Breast epithelium (tissue), 4 donors: ENCODE measurements at regions of chr11 and their contacts with region 1.

Region 1: GRCh38 chr11:5204787-5205186 is 4.3 kb upstream of the OR51V1 start:
- DNase-seq: no peak
- H3K4me3 ChIP-seq: no peak overlapping the region
- H3K27ac ChIP-seq: no peak overlapping the region
- H3K4me1 ChIP-seq: no peaks in the 10 kb centered on the region
- H3K27me3 ChIP-seq: no peaks in the 10 kb centered on the region
- CTCF ChIP-seq: peak in 1 of 3 donors; percentile 43
- POLR2A ChIP-seq: no peak

Region 2: DNA sequence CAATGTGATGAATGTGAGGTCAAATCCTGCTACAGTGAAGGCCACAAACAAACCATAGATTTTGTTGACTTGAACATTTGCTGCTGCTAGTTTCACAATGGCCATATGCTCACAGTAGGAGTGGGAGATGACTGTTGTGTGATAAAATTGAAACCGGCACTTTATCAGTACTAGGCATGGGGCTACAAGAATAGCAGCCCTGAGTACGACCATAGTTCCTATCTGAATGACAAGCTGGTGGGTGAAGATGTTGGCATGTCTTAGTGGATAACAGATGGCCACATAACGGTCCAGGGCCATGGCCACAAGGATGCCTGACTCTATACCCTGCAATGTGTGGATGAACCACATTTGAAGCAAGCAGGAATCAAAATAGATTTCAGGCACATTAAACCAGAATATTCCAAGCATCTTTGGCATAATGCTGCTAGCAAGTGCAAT is 53.1 kb before region 1 on chr11:
- intact Hi-C with region 1: loop called (anchors 2 kb)
- DNase-seq: no peak
- H3K4me3 ChIP-seq: no peak overlapping the region
- H3K27ac ChIP-seq: no peak overlapping the region
- H3K4me1 ChIP-seq: no peaks in the 10 kb centered on the region
- H3K27me3 ChIP-seq: no peaks in the 10 kb centered on the region
- CTCF ChIP-seq: no peak
- POLR2A ChIP-seq: no peak

Region 3: GRCh38 chr11:5267033-5267563 is 62.3 kb after region 1 on chr11:
- intact Hi-C with region 1: no loop called
- DNase-seq: no peak
- H3K4me3 ChIP-seq: no peak overlapping the region
- H3K27ac ChIP-seq: no peak overlapping the region
- H3K4me1 ChIP-seq: no peaks in the 10 kb centered on the region
- H3K27me3 ChIP-seq: no peaks in the 10 kb centered on the region
- CTCF ChIP-seq: no peak
- POLR2A ChIP-seq: no peak